ENCODE measurements at regions of chr5 and their contacts with region 1.

Region 1: DNA sequence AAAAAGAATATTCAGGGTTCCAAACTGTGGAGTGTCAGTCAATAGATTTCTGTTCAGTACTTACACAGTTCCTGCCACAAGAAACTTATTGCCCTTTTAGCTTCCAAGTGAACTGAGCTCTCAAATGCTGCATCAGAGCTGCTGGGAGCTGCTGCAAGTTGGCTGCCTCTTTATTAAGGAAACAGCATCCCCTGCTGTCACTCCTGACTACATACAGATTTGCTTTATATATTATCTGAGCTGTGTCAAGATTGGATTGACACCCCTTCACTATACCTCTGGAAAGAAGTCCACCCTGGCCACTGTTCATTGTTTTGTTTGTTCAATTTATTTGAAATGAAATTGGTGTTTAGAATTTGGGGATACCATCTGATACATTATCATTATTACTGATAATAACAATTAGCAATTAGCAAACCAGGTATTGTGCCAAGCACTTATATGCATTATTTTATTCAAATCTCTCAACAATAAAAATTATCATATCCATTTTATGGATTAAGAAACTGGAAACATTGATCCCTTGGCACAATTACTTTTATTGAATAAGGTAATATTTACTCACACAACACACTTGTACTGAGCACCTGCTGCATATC is 16.4 kb upstream of the C5orf58 start:
- DNase-seq: peak; percentile 70
- ATAC-seq: peak; percentile 28
- H3K4me3 ChIP-seq: no peak overlapping the region
- H3K27ac ChIP-seq: no peak overlapping the region
- H3K4me1 ChIP-seq: peaks cover 39% of the 10 kb centered on the region
- H3K27me3 ChIP-seq: no peaks in the 10 kb centered on the region
- CTCF ChIP-seq: peak; percentile 80

Region 2: DNA sequence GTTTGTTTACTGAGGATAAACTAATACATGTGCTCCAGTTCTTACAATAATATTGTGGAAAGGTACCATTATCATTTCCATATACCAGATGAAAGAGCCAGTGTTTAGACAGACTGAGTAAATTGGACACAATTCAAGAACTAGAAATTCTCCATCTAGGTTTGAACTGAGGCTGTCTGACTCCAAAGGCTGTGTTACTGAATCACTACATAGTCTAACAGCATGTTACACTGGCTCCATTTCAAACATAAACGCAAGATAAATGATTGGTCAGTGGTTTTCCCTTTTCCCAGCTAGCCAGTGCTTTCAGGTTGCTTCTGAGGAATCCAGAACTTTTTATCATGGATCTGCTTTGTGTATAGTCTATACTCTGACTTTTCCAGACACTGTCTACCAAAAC is 624.7 kb before region 1 on chr5:
- CTCF ChIA-PET with region 1: interaction called, 4 read pairs
- POLR2A ChIA-PET with region 1: interaction called, 6 read pairs
- intact Hi-C with region 1: loop called (anchors 5 kb)
- DNase-seq: peak; percentile 60
- ATAC-seq: peak; percentile 48
- H3K4me3 ChIP-seq: no peak overlapping the region
- H3K27ac ChIP-seq: peak overlapping the region; percentile 93
- H3K4me1 ChIP-seq: peaks cover 47% of the 10 kb centered on the region
- H3K27me3 ChIP-seq: no peaks in the 10 kb centered on the region
- CTCF ChIP-seq: no peak

Region 3: GRCh38 chr5:169923988-169924387 is 292.4 kb before region 1 on chr5:
- CTCF ChIA-PET with region 1: no interaction called
- POLR2A ChIA-PET with region 1: no interaction called
- intact Hi-C with region 1: loop called (anchors 10 kb)
- DNase-seq: no peak
- ATAC-seq: no peak
- H3K4me3 ChIP-seq: no peak overlapping the region
- H3K27ac ChIP-seq: no peak overlapping the region
- H3K4me1 ChIP-seq: peaks cover 25% of the 10 kb centered on the region
- H3K27me3 ChIP-seq: no peaks in the 10 kb centered on the region
- CTCF ChIP-seq: no peak

Region 4: GRCh38 chr5:170100066-170100943 is 116.1 kb before region 1 on chr5:
- CTCF ChIA-PET with region 1: interaction called, 11 read pairs
- POLR2A ChIA-PET with region 1: no interaction called
- intact Hi-C with region 1: loop called (anchors 1 kb)
- DNase-seq: peak; percentile 74
- ATAC-seq: peak; percentile 81
- H3K4me3 ChIP-seq: no peak overlapping the region
- H3K27ac ChIP-seq: no peak overlapping the region
- H3K4me1 ChIP-seq: peaks cover 7% of the 10 kb centered on the region; the same call in 1 of the 2 replicates
- H3K27me3 ChIP-seq: no peaks in the 10 kb centered on the region
- CTCF ChIP-seq: peak; percentile 75

Region 5: DNA sequence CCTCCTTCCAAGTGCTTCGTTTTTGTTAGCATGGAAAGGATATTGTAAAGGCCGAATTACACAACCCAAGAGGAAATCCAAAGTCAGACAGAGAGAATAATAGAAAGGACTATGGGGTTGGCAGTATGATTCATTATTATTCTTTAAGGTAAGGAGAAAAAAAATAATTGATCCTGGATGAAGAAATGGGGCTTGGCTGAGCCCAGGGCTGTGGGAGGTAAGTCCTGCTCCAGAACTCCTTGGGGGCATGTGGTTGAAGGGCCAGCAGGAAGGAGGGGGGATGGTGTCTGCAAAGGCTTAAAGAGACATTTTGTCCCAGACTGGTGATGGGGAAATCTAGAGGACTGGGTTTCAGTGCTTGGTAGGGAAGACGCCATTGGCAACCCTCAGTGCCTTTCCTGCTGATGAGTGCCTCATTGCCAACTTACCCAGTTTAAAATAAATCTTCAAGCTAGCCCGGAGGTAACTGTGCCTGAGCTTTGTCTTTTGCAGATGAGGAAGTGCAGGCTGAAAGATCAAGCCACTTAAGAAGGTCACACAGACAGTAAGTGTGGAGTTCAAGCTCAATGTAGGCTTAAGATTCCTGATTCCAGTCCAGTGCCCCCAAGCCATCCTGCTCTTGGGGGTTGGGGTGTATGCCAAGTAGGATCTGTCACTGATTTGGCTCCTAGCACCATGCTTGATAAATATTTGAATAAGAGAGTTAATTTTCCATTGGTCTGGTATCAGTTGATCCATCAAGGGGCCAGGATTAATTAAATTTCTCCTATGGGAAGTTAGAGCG is 80.4 kb before region 1 on chr5:
- CTCF ChIA-PET with region 1: no interaction called
- POLR2A ChIA-PET with region 1: no interaction called
- intact Hi-C with region 1: no loop called
- DNase-seq: no peak
- ATAC-seq: no peak
- H3K4me3 ChIP-seq: no peak overlapping the region
- H3K27ac ChIP-seq: no peak overlapping the region
- H3K4me1 ChIP-seq: peaks cover 9% of the 10 kb centered on the region; the same call in 1 of the 2 replicates
- H3K27me3 ChIP-seq: no peaks in the 10 kb centered on the region
- CTCF ChIP-seq: no peak

Region 6: DNA sequence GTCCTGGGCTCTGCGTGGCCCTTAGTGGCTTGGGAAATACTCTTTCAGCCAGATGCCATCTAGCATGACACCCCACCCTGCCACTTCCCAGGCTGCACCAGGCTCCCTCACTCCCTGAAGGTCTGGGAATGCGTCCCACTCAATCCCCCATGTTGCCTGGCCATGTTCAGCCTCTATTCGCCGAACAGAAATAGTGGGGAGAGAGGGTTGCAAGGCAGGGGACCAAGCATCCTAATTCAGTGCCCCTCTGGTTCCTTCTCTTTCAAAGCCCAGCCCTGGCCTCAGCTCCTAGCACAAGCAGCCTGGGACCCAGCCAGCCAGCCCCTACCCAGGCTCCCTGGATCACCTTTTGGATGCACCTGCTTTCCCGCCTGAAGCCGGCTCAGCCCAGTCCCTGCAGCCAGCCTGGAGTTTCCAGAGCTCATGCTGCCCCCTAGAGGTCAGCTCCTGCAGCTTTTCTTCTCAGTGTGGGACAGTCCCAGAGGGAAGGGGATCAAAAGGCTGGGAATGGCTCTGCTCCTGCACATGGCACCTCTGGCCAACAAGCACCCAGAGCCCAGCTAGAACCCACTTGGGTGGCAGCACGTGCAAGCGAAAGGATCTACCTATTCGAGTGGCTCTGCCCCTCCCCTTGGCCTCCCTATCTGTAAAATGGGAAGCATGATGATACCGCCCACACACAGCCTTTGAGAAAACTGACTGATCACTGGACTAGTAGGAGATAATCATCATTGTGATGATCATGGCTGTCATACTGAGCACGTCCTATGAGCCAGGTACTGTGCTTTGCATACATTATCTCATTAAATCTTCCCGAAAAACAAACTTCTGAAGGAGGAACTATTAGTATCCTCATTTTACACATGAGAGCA is 32.3 kb before region 1 on chr5:
- CTCF ChIA-PET with region 1: interaction called, 11 read pairs
- POLR2A ChIA-PET with region 1: no interaction called
- intact Hi-C with region 1: loop called (anchors 1 kb)
- DNase-seq: peak; percentile 74
- ATAC-seq: peak; percentile 96
- H3K4me3 ChIP-seq: no peak overlapping the region
- H3K27ac ChIP-seq: no peak overlapping the region
- H3K4me1 ChIP-seq: no peaks in the 10 kb centered on the region
- H3K27me3 ChIP-seq: no peaks in the 10 kb centered on the region
- CTCF ChIP-seq: peak; percentile 82